IMR-90 (cell line): ENCODE measurements at regions of chr3 and their contacts with region 1.

Region 1: GRCh38 chr3:49377483-49377882 is 19.3 kb upstream of the GPX1 start:
- DNase-seq: peak; percentile 38
- ATAC-seq: no peak
- H3K4me3 ChIP-seq: no peak overlapping the region
- H3K27ac ChIP-seq: no peak overlapping the region
- H3K4me1 ChIP-seq: peaks cover 2% of the 10 kb centered on the region; the same call in 1 of the 2 replicates
- H3K27me3 ChIP-seq: no peaks in the 10 kb centered on the region
- CTCF ChIP-seq: no peak
- POLR2A ChIP-seq: no peak
- RAD21 ChIP-seq: no peak

Region 2: GRCh38 chr3:49351521-49352011 is 25.9 kb before region 1 on chr3:
- CTCF ChIA-PET with region 1: no interaction called
- POLR2A ChIA-PET with region 1: no interaction called
- dilution Hi-C with region 1: no loop called
- in situ Hi-C with region 1: no loop called
- intact Hi-C with region 1: loop called (anchors 1 kb)
- DNase-seq: peak; percentile 94
- ATAC-seq: peak; percentile 88
- H3K4me3 ChIP-seq: no peak overlapping the region
- H3K27ac ChIP-seq: peak overlapping the region; percentile 88
- H3K4me1 ChIP-seq: peaks cover 20% of the 10 kb centered on the region
- H3K27me3 ChIP-seq: no peaks in the 10 kb centered on the region
- CTCF ChIP-seq: no peak
- POLR2A ChIP-seq: no peak
- RAD21 ChIP-seq: peak; percentile 8; the same call in 1 of the 2 replicates

Region 3: DNA sequence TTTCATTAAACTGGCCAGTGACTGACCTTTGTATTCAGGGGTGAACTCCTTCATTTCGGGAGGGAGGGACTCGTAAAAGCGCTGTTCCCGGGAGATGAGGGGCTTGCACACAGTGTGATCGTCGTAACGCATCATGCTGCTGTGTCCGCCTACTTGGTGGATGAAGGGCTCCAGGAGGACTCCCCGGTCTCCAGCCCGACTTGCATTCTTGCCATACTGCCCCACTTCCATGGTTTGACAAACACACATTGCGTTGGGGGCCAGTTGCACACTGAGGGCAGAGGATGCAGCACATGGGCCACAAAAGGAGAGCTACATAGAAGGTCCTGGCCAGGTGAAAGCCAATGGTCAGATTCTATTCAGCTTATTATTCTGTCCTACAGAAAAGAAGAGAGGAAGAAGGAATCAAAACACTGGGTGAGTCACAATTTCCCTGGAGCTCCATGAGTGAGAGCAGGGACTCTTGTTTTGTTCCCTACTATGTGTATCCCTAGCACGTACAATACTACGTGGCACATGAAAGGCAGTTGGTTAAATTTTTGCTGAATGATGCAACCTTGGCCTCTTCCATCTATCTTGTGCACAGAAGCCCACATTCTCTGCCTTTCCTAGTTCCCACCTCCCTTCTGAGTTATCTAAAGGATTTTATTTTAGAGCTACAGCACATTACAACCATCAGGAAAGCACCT is 370.5 kb after region 1 on chr3:
- CTCF ChIA-PET with region 1: no interaction called
- POLR2A ChIA-PET with region 1: no interaction called
- dilution Hi-C with region 1: no loop called
- in situ Hi-C with region 1: no loop called
- intact Hi-C with region 1: no loop called
- DNase-seq: peak; percentile 79
- ATAC-seq: peak; percentile 47; the same call in 1 of the 2 replicates
- H3K4me3 ChIP-seq: no peak overlapping the region
- H3K27ac ChIP-seq: no peak overlapping the region
- H3K4me1 ChIP-seq: peaks cover 7% of the 10 kb centered on the region; the same call in 1 of the 2 replicates
- H3K27me3 ChIP-seq: no peaks in the 10 kb centered on the region
- CTCF ChIP-seq: no peak
- POLR2A ChIP-seq: no peak
- RAD21 ChIP-seq: no peak